ENCODE measurements at regions of chr14 and their contacts with region 1.

Region 1: DNA sequence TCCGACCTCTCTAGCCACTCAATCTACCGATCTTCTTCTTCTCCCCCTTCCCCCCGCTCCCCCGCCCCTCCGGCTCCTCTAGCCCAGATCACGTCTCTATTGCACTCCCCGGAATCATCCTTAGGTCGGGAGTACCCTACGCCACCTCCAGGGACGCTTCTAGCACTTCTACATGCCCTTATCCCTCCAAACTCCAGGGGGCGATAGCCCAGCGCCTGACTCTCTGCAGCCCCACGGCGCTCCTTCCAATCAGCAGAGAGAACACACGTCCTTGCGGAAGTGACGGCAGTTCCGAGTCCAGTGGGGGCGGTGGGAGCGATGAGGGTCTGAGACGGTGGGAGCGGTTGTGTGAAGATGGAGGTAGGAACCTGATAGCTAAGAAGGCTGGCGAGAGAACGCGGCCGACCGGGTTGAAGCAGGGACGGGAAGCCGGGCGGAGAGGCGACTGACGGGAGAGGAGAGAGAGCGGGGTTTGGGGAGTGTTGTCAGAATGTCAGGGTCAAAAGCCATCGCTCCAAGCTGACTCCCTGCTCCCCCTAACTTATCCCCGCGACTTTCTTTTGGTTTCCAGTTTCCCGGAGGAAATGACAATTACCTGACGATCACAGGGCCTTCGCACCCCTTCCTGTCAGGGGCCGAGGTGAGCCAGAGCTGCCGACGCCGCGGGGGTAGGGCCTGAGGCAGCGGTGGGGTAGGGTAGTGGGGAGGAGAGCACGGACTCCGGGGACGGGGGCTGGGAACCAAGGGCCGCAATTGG is at the starts of genes RAB2B and TOX4:
- DNase-seq: peak; percentile 98
- H3K4me3 ChIP-seq: peak within 1 kb of the TSS; percentile 93
- H3K27ac ChIP-seq: peak within 1 kb of the TSS; percentile 58
- H3K4me1 ChIP-seq: peaks cover 16% of the 10 kb centered on the region
- CTCF ChIP-seq: peak; percentile 89
- total RNA-seq, gene RAB2B: 14.4 and 14.5 TPM in 2 replicates
- total RNA-seq, gene TOX4: 17.6 and 26.1 TPM in 2 replicates

Region 2: DNA sequence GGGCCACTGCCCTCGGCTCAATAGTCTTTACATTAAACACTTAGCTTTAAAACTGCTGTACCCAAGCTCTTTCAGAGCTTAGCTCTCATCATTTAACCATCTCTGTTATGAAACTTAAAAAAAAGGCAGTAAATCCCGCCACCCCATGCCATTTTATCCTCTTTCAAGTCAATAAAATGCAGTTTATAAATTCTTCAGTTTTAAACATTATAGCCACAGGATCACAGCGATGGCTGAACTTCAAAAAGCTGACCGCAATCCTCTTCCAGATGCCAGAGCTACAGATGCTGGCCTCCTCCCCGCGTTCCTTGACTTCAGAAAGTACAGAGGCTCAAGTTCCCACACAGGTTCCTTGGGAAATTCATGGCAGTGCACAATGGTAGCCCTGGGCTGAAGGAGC is 98.6 kb after region 1 on chr14:
- CTCF ChIA-PET with region 1: interaction called, 12 read pairs
- POLR2A ChIA-PET with region 1: no interaction called
- intact Hi-C with region 1: no loop called
- DNase-seq: no peak
- H3K4me3 ChIP-seq: no peak overlapping the region
- H3K27ac ChIP-seq: no peak overlapping the region
- H3K4me1 ChIP-seq: no peaks in the 10 kb centered on the region
- CTCF ChIP-seq: no peak

Region 3: GRCh38 chr14:21711360-21711961 is 234.4 kb after region 1 on chr14:
- CTCF ChIA-PET with region 1: no interaction called
- POLR2A ChIA-PET with region 1: no interaction called
- intact Hi-C with region 1: no loop called
- DNase-seq: peak; percentile 59
- H3K4me3 ChIP-seq: no peak overlapping the region
- H3K27ac ChIP-seq: no peak overlapping the region
- H3K4me1 ChIP-seq: no peaks in the 10 kb centered on the region
- CTCF ChIP-seq: peak; percentile 94

Region 4: DNA sequence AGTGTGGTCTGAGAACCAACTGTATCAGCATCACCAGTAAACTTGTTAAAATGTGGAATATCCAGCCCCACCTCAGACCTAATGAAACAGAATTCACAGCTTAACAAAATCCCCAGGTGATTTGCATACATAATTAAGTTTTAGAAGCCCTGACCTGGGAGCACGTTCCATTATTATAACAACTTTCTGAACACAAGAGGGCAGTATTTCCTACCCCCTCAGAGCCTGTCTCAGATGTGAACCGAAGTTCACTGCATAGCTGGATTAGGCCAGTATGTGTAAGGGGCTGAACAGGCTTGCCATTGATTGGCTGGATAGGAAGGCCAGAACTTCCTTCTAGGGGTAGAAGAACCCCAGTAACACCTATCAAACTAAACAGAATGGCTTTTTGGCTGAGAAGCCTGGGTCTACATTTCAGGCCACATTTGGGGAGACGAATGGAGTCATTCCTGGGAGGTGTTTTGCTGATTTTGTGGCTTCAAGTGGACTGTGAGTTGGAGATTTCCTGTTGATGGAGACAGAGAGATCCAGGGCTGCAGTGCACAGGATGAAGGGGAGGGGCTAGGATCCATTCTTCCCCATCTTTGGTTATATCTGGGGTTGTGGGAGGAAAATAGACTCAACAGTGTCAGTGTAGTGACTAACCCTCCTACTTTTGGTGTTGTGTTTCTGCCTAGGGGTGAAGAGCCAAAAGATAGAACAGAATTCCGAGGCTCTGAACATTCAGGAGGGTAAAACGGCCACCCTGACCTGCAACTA is 291.2 kb after region 1 on chr14:
- CTCF ChIA-PET with region 1: no interaction called
- POLR2A ChIA-PET with region 1: no interaction called
- intact Hi-C with region 1: no loop called
- DNase-seq: peak; percentile 48
- H3K4me3 ChIP-seq: no peak overlapping the region
- H3K27ac ChIP-seq: no peak overlapping the region
- H3K4me1 ChIP-seq: no peaks in the 10 kb centered on the region
- CTCF ChIP-seq: peak; percentile 79